Activated CD4-positive, alpha-beta memory T cell treated with anti-CD3 and anti-CD28 coated beads for 36 hours (primary cell): ENCODE measurements at regions of chr15 and their contacts with region 1.

Region 1: GRCh38 chr15:78909791-78910228 is 35.0 kb downstream of the CTSH start:
- DNase-seq: peak; percentile 47
- H3K4me3 Mint-ChIP-seq: no peak overlapping the region
- H3K27ac Mint-ChIP-seq: peak overlapping the region; percentile 53
- H3K4me1 Mint-ChIP-seq: peaks cover 23% of the 10 kb centered on the region
- H3K27me3 Mint-ChIP-seq: no peaks in the 10 kb centered on the region

Region 2: GRCh38 chr15:78828920-78829319 is 80.9 kb before region 1 on chr15:
- CTCF ChIA-PET with region 1: no interaction called
- POLR2A ChIA-PET with region 1: no interaction called
- intact Hi-C with region 1: no loop called
- DNase-seq: no peak
- H3K4me3 Mint-ChIP-seq: no peak overlapping the region
- H3K27ac Mint-ChIP-seq: no peak overlapping the region
- H3K4me1 Mint-ChIP-seq: no peaks in the 10 kb centered on the region
- H3K27me3 Mint-ChIP-seq: peaks cover 14% of the 10 kb centered on the region

Region 3: DNA sequence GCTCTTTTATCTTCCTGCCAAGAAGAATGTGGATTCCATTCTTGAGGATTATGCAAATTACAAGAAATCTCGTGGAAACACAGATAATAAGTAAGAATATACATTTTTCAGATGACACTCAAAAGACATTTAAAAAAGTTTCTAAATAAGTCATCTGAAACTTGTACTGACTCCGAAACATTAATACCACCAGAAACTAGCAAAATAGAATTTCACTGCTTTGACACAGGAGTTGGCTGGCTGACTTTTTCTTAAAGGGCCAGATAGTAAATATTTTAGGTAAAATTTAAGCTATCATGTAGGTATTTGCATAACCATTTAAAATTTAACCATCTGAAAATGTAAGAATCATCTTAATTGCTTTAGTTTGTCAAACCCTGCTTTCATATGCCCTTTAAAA is 16.3 kb before region 1 on chr15:
- CTCF ChIA-PET with region 1: interaction called, 15 read pairs
- POLR2A ChIA-PET with region 1: interaction called, 4 read pairs
- intact Hi-C with region 1: no loop called
- DNase-seq: no peak
- H3K4me3 Mint-ChIP-seq: no peak overlapping the region
- H3K27ac Mint-ChIP-seq: no peak overlapping the region
- H3K4me1 Mint-ChIP-seq: peaks cover 25% of the 10 kb centered on the region
- H3K27me3 Mint-ChIP-seq: no peaks in the 10 kb centered on the region